OCI-LY7 (cell line): ENCODE measurements at regions of chr11 and their contacts with region 1.

Region 1: DNA sequence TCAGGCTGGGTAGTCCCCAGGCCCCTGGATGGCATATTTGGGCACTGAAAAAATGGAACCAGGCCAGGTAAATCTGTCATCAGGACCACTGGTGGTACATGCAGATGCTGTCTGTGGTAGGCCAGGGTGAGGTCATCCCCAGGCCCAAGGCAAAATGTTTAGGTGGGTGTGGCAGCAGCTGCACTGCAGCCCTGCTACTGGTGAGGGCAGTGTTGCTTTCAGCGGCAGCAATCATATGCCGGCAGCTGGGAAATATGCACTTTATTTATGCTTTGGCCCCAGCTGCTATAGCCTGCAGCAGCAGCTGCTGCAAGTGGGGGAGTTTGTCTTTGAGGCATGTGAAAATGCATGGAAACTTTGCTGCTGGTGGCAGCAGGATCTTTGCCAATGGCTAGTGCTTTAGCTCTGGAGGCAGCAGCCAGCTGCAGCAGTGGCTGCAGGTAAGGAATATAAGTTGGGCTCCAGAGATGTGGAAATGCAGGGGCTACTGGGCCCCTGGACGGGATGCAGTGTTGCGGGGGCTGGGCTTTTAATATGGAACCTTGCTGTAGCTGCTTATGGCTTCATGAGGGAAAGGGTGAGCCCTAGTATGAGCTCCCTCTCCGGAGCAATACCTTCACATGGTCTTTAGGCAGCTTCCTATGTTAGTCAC is 365.7 kb upstream of the CADM1 start:
- DNase-seq: peak; percentile 82
- H3K4me3 ChIP-seq: no peak overlapping the region
- H3K27ac ChIP-seq: no peak overlapping the region
- H3K4me1 ChIP-seq: peaks cover 47% of the 10 kb centered on the region
- CTCF ChIP-seq: peak; percentile 89

Region 2: GRCh38 chr11:115912484-115912945 is 42.6 kb after region 1 on chr11:
- CTCF ChIA-PET with region 1: interaction called, 8 read pairs
- POLR2A ChIA-PET with region 1: interaction called, 9 read pairs
- intact Hi-C with region 1: loop called (anchors 1 kb)
- DNase-seq: peak; percentile 82
- H3K4me3 ChIP-seq: peak overlapping the region; percentile 35
- H3K27ac ChIP-seq: peak overlapping the region; percentile 61
- H3K4me1 ChIP-seq: peaks cover 30% of the 10 kb centered on the region
- CTCF ChIP-seq: peak; percentile 74

Region 3: DNA sequence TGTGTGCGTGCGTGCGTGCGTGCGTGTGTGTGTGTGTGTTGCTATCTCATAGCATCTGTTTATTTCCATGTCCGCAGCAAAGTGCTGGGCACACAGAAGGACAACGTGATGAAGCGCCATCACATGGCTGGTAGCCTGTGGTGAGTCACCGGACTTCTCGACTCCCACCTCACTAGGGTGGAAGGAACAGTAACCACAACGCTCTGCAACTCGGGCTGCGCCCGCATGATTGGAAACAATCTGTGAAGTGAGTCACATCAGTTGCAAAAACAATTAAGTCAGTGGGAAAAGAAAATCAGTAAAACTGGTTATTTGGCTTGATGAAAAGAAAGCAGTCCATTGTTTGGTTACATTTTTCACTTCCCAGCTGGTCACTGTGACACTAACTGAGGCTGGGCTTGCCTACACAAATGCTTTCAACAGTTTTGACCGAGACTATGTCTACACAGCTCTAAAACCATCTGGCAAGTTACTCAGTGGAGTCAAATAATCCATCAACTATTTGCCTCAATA is 71.6 kb after region 1 on chr11:
- CTCF ChIA-PET with region 1: interaction called, 5 read pairs
- POLR2A ChIA-PET with region 1: interaction called, 3 read pairs
- intact Hi-C with region 1: loop called (anchors 1 kb)
- DNase-seq: no peak
- H3K4me3 ChIP-seq: no peak overlapping the region
- H3K27ac ChIP-seq: no peak overlapping the region
- H3K4me1 ChIP-seq: peaks cover 30% of the 10 kb centered on the region
- CTCF ChIP-seq: no peak

Region 4: GRCh38 chr11:116035977-116036376 is 166.1 kb after region 1 on chr11:
- CTCF ChIA-PET with region 1: no interaction called
- POLR2A ChIA-PET with region 1: no interaction called
- intact Hi-C with region 1: no loop called
- DNase-seq: no peak
- H3K4me3 ChIP-seq: no peak overlapping the region
- H3K27ac ChIP-seq: no peak overlapping the region
- H3K4me1 ChIP-seq: no peaks in the 10 kb centered on the region
- CTCF ChIP-seq: no peak

Region 5: DNA sequence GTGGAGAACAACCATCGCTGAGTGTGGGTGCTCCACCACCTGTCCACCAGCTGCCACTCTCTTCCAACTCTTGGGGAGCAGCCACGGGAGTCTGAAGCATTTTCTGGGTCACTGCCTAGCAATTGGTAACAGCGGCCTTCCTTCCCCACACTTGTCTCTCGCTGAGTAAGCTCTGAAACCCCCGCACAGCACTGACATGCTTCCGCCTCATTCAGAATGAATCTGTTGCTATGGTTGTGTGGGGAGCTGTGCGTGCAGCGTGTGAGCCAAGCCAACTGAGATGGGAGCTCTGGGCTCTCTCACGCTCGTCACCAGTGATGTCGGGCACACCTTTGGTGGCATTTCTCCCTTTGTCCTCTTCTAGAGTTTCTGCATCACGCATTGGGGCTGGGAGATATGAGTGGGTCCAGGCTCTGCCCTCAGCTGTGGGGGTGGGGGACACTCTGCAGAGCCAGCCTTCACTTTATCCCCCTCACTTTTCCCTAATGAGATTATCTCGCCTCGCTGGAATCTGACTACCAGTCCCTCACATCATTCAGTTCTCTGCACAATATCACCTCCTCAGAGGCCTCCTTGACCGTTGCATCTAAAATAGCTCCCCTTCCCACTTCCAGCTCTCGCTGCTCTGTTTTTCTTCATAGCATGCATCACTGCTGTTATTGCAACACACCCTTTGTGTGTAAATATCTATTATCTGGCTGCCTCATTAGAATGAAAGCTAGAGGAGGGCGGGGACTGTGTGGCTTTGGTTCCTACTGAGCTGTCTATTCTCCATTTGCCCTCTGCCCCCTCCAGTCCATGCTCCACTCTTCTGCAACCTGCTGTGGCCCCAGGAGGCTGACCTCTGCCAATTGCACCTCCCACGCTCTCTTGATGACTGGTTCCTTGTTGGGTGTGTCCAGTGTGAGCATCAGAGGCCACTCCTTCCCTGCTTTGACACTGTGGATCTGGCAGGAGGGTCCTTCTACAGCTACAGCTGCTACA is 204.2 kb after region 1 on chr11:
- CTCF ChIA-PET with region 1: no interaction called
- POLR2A ChIA-PET with region 1: interaction called, 4 read pairs
- intact Hi-C with region 1: loop called (anchors 2 kb)
- DNase-seq: no peak
- H3K4me3 ChIP-seq: no peak overlapping the region
- H3K27ac ChIP-seq: no peak overlapping the region
- H3K4me1 ChIP-seq: no peaks in the 10 kb centered on the region
- CTCF ChIP-seq: no peak